ENCODE measurements at regions of chr4 and their contacts with region 1.

Region 1: DNA sequence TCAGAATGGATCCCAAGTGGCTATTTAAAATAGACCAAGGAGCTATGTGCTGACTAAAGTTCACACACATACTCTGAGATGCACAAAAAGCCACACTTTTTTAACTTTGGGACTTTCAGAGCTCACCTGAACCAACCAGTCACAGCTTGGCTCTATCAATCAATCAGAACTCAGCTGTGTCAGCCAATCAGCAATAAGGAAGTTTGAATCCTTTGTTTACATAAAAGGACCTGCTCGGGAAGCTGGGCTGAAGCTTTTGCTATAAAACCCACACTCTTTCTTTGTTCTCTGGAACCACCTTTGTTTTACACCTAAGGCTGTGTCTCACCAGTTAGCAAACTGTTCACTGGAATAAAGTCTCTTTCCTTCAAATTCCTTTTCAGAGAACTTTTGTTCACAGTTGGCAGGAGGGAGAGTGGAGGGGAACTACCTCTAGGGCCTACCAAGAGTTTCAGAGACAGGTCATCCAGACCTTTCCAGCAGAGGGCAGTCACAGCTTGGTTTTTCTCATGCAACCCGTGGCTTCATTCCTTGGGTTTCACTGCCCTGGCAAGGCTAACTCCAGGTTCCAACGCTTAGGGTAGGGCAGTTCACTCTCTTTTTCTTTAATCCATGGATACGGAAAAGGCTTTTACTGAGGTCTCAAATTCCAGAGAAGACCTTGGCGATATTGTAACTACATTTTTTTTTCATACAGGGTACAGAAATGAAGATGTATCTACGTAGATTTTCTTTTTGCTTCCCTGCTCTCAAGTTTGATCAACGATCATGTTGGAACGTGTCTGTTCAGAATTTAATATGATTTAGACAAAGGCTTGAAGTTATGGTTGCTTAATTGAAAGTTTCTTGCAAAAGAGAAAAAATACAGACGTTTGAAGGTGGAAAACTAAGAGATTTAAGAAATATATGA is 80.7 kb downstream of the GPRIN3 start:
- DNase-seq: peak; percentile 89
- H3K4me3 ChIP-seq: no peak overlapping the region
- H3K27ac ChIP-seq: peak overlapping the region; percentile 5 to 40 (median 28)
- H3K4me1 ChIP-seq: peaks cover 0 to 10% (median 4%) of the 10 kb centered on the region in 4 donors
- H3K27me3 ChIP-seq: no peaks in the 10 kb centered on the region
- CTCF ChIP-seq: peak; percentile 73 to 92 (median 74)
- EP300 ChIP-seq: no peak
- POLR2A ChIP-seq: no peak

Region 2: DNA sequence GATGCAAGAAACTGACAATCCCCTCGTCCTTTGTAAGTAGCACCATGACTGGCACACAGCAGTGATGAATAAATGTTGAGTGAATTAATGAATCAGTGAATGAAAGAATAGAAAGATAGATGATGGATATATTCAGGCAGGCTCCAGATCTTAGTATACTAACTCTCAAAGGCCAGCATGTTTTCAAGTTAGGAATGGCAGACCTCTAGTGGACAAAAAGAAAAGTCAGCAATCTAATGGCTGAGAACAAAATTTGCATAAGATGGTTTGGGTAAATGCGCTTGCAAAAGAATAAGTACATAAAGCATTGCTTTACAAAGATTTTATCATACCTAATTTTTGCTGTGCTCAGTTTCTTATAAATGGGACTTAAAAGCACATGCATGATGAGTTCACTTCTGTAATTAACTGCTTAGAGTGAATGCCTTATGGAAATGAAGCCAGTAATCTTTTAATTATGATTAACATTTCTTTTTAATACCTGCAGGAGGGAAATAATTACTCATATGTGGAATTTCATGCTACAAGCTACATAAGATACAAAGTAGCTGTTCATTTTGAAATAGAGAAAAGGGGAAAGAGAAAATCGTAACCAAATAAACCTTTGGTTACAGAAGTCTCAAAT is 207.6 kb after region 1 on chr4:
- in situ Hi-C with region 1: loop called (anchors 5 to 10 kb)
- intact Hi-C with region 1: loop called (anchors 5 kb)
- DNase-seq: no peak
- H3K4me3 ChIP-seq: no peak overlapping the region
- H3K27ac ChIP-seq: no peak overlapping the region
- H3K4me1 ChIP-seq: no peaks in the 10 kb centered on the region
- H3K27me3 ChIP-seq: no peaks in the 10 kb centered on the region
- CTCF ChIP-seq: peak; percentile 69 to 81 (median 77)
- EP300 ChIP-seq: no peak
- POLR2A ChIP-seq: no peak

Region 3: GRCh38 chr4:89661490-89661889 is 434.6 kb after region 1 on chr4:
- in situ Hi-C with region 1: no loop called
- intact Hi-C with region 1: no loop called
- DNase-seq: no peak
- H3K4me3 ChIP-seq: no peak overlapping the region
- H3K27ac ChIP-seq: no peak overlapping the region
- H3K4me1 ChIP-seq: no peaks in the 10 kb centered on the region
- H3K27me3 ChIP-seq: no peaks in the 10 kb centered on the region
- CTCF ChIP-seq: no peak
- EP300 ChIP-seq: no peak
- POLR2A ChIP-seq: no peak

Region 4: DNA sequence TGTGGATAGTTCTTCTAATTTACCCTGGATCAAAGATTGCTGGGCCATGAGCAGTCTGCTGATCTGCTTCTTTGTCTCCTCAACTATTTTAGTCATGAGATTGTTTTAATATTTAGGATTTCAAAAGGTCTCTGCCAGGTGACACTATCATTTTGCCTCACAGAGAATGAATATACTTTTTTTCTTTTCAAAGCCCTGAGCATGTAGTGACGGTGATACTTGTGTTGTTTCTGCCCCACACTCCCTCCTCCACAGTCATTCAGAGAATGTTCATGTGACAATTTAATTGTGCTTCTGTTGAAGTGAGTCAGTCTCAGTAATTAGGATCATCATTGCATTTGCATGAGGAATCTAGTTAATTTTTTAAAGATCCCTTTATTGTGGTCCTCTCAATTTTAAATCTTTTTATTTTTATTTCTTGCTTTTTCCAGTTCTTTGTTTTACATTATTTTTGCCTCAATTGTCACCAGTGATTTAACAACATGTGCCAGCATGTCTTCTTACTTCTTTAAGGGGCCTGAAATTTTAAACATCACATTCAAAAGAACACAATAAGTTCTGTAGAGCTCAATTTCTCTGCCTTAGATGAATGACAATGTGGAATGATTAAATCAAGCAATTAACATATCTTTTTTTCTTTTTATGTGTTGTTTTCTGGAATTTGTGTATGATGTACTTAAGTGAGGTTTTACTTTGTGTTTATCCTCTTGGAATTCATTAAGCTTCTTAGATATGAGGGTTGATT is 680.0 kb after region 1 on chr4:
- in situ Hi-C with region 1: loop called in 3 of 4 experiments (anchors 25 kb)
- intact Hi-C with region 1: loop called (anchors 10 kb)
- DNase-seq: no peak
- H3K4me3 ChIP-seq: no peak overlapping the region
- H3K27ac ChIP-seq: no peak overlapping the region
- H3K4me1 ChIP-seq: no peaks in the 10 kb centered on the region
- H3K27me3 ChIP-seq: no peaks in the 10 kb centered on the region
- CTCF ChIP-seq: no peak
- EP300 ChIP-seq: no peak
- POLR2A ChIP-seq: no peak

Measured in transverse colon (tissue), 4 donors.